Activated CD4-positive, alpha-beta T cell treated with anti-CD3 and anti-CD28 coated beads for 36 hours (primary cell): ENCODE measurements at regions of chr6 and their contacts with region 1.

Region 1: DNA sequence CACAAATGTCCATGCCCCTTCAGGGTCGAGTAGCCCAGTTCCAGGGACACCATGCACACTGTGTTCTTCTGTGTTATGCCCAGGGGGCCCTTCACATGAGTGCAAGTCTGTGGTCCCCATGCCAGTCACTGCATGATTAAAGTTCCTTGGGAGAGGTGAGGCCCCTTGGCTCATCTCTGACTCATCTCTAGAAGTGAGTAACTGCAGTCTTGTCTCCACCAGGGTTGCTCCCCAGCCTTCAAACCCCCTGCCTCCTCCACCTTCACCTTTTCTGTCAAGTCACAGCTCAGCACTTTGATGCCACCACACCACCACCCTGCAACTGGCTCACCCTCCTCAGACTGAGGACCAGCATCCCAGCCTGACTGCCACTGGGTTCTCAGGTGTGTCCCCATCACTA is 161.7 kb downstream of the UNC5CL start:
- DNase-seq: peak; percentile 75
- ATAC-seq: peak; percentile 97
- H3K4me3 Mint-ChIP-seq: no peak overlapping the region
- H3K27ac Mint-ChIP-seq: no peak overlapping the region
- H3K4me1 Mint-ChIP-seq: peaks cover 14% of the 10 kb centered on the region
- H3K27me3 Mint-ChIP-seq: peaks cover 28% of the 10 kb centered on the region

Region 2: GRCh38 chr6:40912158-40912946 is 35.0 kb after region 1 on chr6:
- CTCF ChIA-PET with region 1: interaction called, 7 read pairs
- POLR2A ChIA-PET with region 1: no interaction called
- intact Hi-C with region 1: loop called in 1 of 2 experiments (anchors 1 kb)
- DNase-seq: peak; percentile 64
- ATAC-seq: peak; percentile 82
- H3K4me3 Mint-ChIP-seq: no peak overlapping the region
- H3K27ac Mint-ChIP-seq: no peak overlapping the region
- H3K4me1 Mint-ChIP-seq: peaks cover 7% of the 10 kb centered on the region
- H3K27me3 Mint-ChIP-seq: peaks cover 11% of the 10 kb centered on the region

Region 3: GRCh38 chr6:41013466-41014153 is 136.2 kb after region 1 on chr6:
- CTCF ChIA-PET with region 1: no interaction called
- POLR2A ChIA-PET with region 1: no interaction called
- intact Hi-C with region 1: no loop called
- DNase-seq: no peak
- ATAC-seq: no peak
- H3K4me3 Mint-ChIP-seq: no peak overlapping the region
- H3K27ac Mint-ChIP-seq: no peak overlapping the region
- H3K4me1 Mint-ChIP-seq: no peaks in the 10 kb centered on the region
- H3K27me3 Mint-ChIP-seq: no peaks in the 10 kb centered on the region